Breast epithelium (tissue), 4 donors: ENCODE measurements at regions of chr2 and their contacts with region 1.

Region 1: GRCh38 chr2:383178-383577 is 95.3 kb upstream of the ALKAL2 start:
- DNase-seq: no peak
- H3K4me3 ChIP-seq: no peak overlapping the region
- H3K27ac ChIP-seq: no peak overlapping the region
- H3K4me1 ChIP-seq: no peaks in the 10 kb centered on the region
- H3K27me3 ChIP-seq: no peaks in the 10 kb centered on the region
- CTCF ChIP-seq: no peak
- POLR2A ChIP-seq: no peak

Region 2: GRCh38 chr2:557697-558642 is 174.8 kb after region 1 on chr2:
- intact Hi-C with region 1: loop called (anchors 10 kb)
- DNase-seq: no peak
- H3K4me3 ChIP-seq: peak overlapping the region in 1 of 3 donors; percentile 3
- H3K27ac ChIP-seq: no peak overlapping the region
- H3K4me1 ChIP-seq: no peaks in the 10 kb centered on the region
- H3K27me3 ChIP-seq: peaks cover 0 to 4% of the 10 kb centered on the region in 2 donors
- CTCF ChIP-seq: no peak
- POLR2A ChIP-seq: no peak